ENCODE measurements at regions of chr16 and their contacts with region 1.

Region 1: DNA sequence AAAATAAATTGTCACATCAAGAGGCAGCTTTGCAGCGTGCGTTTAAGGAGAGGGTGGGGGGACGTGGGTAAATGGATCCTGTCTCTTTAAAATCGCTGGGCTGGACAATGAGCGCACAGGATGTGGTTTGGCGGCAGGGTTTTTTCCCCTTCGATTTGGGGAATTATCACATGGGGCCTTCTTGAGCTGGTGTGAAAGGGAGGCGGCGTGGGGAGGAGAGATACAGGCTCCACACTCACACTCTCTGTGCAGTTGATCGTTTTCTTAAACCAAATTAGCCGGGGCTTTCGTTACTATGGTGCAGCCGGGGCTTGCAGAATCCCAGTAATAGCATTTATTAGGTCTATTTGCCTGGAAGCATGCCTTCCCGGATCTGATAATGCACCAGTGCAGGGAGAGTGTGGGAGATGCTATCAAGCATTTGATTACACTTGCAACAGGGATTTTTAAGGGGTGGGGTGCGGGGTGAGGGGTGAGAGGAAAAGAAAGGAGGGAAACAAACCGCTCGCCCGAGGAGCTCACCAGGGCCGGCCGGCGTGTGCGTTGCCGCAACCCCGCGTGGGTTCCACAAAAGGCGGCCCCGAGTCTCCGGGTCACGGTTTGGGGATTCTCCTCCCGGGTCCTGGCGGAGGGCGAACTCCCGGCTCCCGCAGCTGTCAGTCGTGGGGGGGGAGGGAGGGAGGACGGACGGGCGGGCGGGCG is 58.9 kb upstream of the GSE1 start:
- DNase-seq: peak; percentile 59
- H3K4me3 Mint-ChIP-seq: peak overlapping the region; percentile 73
- H3K27ac Mint-ChIP-seq: peak overlapping the region; percentile 76
- H3K4me1 Mint-ChIP-seq: peaks cover 35% of the 10 kb centered on the region
- H3K27me3 Mint-ChIP-seq: peaks cover 12% of the 10 kb centered on the region
- CTCF ChIP-seq: no peak

Region 2: DNA sequence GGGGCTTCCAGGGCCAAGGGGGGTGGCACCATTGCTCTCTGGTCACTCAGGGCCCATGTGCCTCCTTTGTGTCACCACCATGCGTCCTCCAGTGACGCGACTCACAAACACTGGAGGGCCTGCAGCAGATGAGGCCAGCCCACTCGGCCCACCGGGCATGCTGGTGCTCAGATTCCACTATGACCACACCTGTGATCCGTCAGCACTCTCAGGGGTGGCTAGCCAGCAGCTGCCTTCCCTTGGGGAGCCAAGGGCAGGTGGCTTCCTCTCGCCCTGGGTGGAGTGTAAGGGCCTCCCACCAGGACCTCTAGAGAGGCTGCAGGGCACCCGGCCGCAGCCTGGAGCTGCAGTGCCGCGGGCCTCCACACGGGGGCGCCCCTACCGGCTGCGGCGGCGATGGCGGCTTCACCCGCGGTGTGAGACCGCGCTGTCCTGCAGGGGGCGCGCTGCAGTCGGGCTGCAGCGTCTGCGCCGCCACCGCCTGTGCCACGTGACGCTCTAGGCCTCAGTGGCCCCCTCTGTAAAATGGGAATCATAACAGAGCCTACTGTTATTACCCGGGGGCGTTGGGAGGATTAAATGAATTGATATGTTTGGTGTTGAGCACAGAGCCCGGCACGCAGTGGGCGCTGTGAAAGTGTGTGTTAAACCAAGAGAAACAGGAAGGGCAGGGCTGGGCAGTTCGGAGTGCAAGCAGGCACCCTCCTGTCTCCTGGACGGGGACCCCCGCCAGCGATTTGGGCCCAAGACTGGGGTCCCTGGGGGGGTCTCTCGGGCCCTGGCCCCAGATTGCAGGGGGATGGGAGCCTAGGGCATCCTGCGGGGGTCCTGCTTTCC is 133.5 kb before region 1 on chr16:
- CTCF ChIA-PET with region 1: interaction called, 24 read pairs
- intact Hi-C with region 1: loop called (anchors 2 kb)
- DNase-seq: peak; percentile 85
- H3K4me3 Mint-ChIP-seq: no peak overlapping the region
- H3K27ac Mint-ChIP-seq: no peak overlapping the region
- H3K4me1 Mint-ChIP-seq: peaks cover 38% of the 10 kb centered on the region
- H3K27me3 Mint-ChIP-seq: peaks cover 42% of the 10 kb centered on the region
- CTCF ChIP-seq: peak; percentile 100

Region 3: GRCh38 chr16:85479972-85480751 is 74.1 kb before region 1 on chr16:
- CTCF ChIA-PET with region 1: interaction called, 11 read pairs
- intact Hi-C with region 1: loop called (anchors 5 kb)
- DNase-seq: peak; percentile 86
- H3K4me3 Mint-ChIP-seq: no peak overlapping the region
- H3K27ac Mint-ChIP-seq: no peak overlapping the region
- H3K4me1 Mint-ChIP-seq: peaks cover 15% of the 10 kb centered on the region
- H3K27me3 Mint-ChIP-seq: peaks cover 46% of the 10 kb centered on the region
- CTCF ChIP-seq: peak; percentile 87

Region 4: GRCh38 chr16:85514595-85515318 is 39.5 kb before region 1 on chr16:
- CTCF ChIA-PET with region 1: interaction called, 7 read pairs
- intact Hi-C with region 1: loop called (anchors 1 kb)
- DNase-seq: peak; percentile 83
- H3K4me3 Mint-ChIP-seq: peak overlapping the region; percentile 38
- H3K27ac Mint-ChIP-seq: peak overlapping the region; percentile 40
- H3K4me1 Mint-ChIP-seq: peaks cover 14% of the 10 kb centered on the region
- H3K27me3 Mint-ChIP-seq: peaks cover 24% of the 10 kb centered on the region
- CTCF ChIP-seq: no peak

Region 5: DNA sequence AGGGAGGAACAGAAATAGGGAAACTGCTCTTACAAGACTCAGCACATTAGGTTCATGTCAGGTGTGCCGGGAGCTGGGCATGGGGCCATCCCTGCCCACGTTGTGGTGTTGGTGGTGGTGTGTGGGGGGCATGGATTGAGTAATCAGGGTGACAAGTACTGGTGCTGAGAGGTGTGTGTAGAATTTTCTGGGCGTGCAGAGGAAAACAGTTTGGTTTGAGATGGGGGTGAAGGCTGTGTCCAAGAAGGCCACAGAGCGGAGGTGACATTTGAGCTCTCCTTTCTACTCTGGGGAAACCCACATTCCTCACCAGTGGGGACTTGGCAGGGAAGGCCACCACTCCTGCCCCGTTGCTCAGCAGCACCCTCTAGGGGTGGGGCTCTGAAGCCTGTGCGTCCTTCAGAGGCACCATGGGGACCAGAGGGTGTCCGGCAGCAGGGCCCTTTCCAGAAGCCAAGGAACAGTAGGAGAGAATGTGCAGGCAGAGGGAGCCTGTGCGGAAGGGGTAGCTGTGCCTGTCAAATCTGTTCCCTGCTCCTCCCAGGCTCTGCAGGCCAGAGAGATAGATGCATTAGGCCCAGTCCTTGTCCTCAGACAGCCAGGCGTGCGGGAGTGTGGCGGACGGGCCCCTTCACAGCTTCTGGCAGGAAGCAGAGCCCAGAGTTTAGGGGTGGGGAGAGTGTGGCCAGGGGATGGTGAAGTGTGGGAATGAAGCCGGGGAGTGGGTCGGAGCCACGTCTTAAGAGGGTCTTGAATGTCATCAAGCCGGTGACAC is 10.2 kb after region 1 on chr16:
- CTCF ChIA-PET with region 1: interaction called, 21 read pairs
- intact Hi-C with region 1: no loop called
- DNase-seq: peak; percentile 75
- H3K4me3 Mint-ChIP-seq: no peak overlapping the region
- H3K27ac Mint-ChIP-seq: peak overlapping the region; percentile 5
- H3K4me1 Mint-ChIP-seq: peaks cover 14% of the 10 kb centered on the region
- H3K27me3 Mint-ChIP-seq: peaks cover 13% of the 10 kb centered on the region
- CTCF ChIP-seq: peak; percentile 85

Region 6: GRCh38 chr16:85610508-85611332 is 56.5 kb after region 1 on chr16:
- CTCF ChIA-PET with region 1: interaction called, 8 read pairs
- intact Hi-C with region 1: loop called (anchors 5 kb)
- DNase-seq: peak; percentile 95
- H3K4me3 Mint-ChIP-seq: peak overlapping the region; percentile 76
- H3K27ac Mint-ChIP-seq: peak overlapping the region; percentile 61
- H3K4me1 Mint-ChIP-seq: peaks cover 8% of the 10 kb centered on the region
- H3K27me3 Mint-ChIP-seq: peaks cover 43% of the 10 kb centered on the region
- CTCF ChIP-seq: peak; percentile 99

Region 7: DNA sequence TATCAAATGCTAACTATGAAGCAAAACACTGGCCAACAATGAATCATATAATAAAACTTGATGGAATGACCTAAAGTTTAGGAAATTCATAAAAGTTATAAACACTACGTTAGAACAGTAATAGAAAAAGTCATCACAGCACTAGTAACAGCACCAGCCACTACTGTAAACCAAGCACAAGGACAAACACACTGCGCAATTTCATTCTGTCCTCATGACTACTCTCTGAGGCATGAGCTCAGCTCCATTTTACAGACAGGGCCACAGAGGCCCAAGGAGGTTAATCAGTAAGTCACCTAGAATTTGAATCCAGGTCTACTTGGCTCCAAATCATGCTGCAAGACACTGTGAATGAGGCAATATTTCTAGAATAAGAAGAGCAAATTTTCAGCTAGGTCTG is 231.7 kb after region 1 on chr16:
- CTCF ChIA-PET with region 1: no interaction called
- intact Hi-C with region 1: no loop called
- DNase-seq: no peak
- H3K4me3 Mint-ChIP-seq: no peak overlapping the region
- H3K27ac Mint-ChIP-seq: no peak overlapping the region
- H3K4me1 Mint-ChIP-seq: no peaks in the 10 kb centered on the region
- H3K27me3 Mint-ChIP-seq: no peaks in the 10 kb centered on the region
- CTCF ChIP-seq: no peak

Measured in Calu3 (cell line).